ENCODE measurements at regions of chr2 and their contacts with region 1.

Region 1: DNA sequence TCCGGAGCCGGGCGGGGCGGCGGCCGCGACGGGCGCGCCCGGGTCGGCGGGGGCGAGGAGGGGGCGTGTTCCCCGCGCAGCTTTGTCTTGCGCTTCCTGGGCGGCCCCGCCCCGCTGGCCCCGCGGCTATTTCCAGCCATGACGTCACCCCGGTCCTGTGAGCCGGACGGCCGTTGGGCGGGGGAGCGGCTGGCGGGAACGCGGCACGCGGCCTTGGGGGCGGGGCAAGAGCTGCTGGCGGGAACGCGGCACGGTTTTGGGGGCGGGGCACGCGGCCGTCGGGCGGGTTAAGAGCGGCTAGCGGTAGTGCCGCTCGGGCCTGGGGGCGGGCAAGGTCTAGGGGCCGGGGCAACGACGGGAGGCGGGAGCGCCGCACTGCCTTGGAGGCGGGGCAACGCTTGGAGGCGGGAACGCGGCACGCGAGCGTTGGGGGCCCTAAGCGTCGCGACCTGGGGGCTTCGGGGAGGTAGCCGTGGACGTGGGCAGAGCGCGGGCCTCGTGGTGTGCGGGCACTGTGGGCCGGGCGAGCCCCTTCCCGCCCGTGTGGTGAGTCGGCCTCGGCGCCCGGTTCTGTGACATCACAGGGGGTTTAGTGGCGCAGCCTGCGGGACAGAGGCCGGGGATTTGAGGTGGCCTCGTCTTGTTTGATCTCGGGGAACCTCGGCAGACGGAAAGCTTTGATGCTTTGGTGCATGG is 704 bp downstream of the KLF11 start:
- DNase-seq: peak; percentile 66
- H3K4me3 ChIP-seq: peak overlapping the region; percentile 63
- H3K27ac ChIP-seq: no peak overlapping the region
- H3K27me3 ChIP-seq: peaks cover 5% of the 10 kb centered on the region
- CTCF ChIP-seq: no peak

Region 2: DNA sequence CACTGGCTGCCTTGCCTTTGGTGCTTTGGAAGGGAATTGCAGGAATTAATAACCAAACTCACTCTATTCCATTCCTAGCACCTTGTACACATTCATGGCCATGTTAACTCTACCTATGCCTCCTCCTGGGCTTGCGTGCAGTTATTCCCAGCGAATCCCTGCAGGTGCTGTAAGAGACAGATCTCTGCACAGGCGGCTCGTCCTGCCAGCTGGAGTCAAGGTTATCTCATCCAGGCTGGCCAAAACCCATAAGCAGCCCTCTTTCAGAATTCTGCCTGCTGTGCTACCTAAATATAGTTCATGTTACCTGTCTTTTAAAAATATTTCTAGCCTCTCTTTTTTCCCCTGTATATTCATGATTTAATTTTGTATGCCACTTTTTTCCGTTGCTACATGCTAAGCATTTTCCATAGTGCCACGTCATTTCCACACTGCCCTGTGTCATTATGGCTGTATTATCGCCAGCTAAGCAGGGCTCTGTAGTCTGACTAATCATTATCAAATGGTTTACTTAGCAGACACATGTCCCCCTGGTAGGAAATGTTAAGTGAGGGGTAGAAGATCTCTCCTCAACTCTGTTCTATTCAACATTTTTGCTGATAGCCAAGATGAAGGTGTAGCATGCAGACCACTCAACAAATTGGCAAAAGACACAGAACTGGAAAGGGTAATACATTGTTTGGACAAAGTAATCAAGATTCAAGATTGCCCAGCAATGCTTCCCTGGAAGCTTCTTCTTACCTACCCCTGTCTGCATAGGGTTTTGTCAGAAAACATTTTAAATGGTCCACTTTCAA is 280.5 kb before region 1 on chr2:
- CTCF ChIA-PET with region 1: no interaction called
- POLR2A ChIA-PET with region 1: no interaction called
- DNase-seq: no peak
- H3K4me3 ChIP-seq: no peak overlapping the region
- H3K27ac ChIP-seq: no peak overlapping the region
- H3K27me3 ChIP-seq: no peaks in the 10 kb centered on the region
- CTCF ChIP-seq: no peak

Region 3: GRCh38 chr2:9799665-9800632 is 244.1 kb before region 1 on chr2:
- CTCF ChIA-PET with region 1: interaction called, 58 read pairs
- POLR2A ChIA-PET with region 1: interaction called, 7 read pairs
- DNase-seq: peak; percentile 44
- H3K4me3 ChIP-seq: no peak overlapping the region
- H3K27ac ChIP-seq: no peak overlapping the region
- H3K27me3 ChIP-seq: no peaks in the 10 kb centered on the region
- CTCF ChIP-seq: peak; percentile 99

Region 4: DNA sequence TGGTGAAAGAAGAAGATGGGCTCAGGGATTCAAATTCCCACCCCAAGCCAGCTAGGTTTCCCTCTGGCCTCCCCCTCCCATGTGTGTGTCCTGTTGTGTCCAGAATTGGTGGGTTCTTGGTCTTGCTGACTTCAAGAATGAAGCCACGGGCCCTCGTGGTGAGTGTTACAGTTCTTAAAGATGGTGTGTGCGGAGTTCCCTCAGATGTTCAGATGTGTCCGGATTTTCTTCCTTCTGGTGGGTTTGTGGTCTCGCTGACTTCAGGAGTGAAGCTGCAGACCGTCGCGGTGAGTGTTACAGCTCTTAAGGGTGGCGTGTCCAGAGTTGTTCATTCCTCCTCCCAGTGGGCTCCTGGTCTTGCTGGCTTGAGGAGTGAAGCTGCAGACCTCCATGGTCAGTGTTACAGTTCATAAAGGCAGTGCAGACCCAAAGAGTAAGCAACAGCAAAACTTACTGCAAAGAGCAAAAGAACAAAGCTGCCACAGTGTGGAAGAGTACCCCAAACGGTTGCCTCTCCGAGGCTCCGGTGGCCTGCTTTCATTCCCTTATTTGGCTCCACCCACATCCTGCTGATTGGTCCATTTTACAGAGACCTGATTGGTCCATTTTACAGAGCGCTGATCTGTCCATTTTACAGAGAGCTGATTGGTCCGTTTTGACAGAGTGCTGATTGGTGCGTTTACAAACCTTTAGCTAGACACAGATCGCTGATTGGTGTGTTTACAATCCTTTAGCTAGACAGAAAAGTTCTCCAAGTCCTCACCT is 38.4 kb before region 1 on chr2:
- CTCF ChIA-PET with region 1: no interaction called
- POLR2A ChIA-PET with region 1: no interaction called
- DNase-seq: no peak
- H3K4me3 ChIP-seq: no peak overlapping the region
- H3K27ac ChIP-seq: no peak overlapping the region
- H3K27me3 ChIP-seq: no peaks in the 10 kb centered on the region
- CTCF ChIP-seq: no peak

Region 5: GRCh38 chr2:10057231-10058107 is 13.4 kb after region 1 on chr2:
- CTCF ChIA-PET with region 1: interaction called, 17 read pairs
- POLR2A ChIA-PET with region 1: interaction called, 6 read pairs
- DNase-seq: peak; percentile 62
- H3K4me3 ChIP-seq: peak overlapping the region; percentile 39
- H3K27ac ChIP-seq: peak overlapping the region; percentile 94
- H3K27me3 ChIP-seq: peaks cover 9% of the 10 kb centered on the region
- CTCF ChIP-seq: no peak

Measured in AG04450 (cell line).